ENCODE measurements at regions of chr7 and their contacts with region 1.

Region 1: DNA sequence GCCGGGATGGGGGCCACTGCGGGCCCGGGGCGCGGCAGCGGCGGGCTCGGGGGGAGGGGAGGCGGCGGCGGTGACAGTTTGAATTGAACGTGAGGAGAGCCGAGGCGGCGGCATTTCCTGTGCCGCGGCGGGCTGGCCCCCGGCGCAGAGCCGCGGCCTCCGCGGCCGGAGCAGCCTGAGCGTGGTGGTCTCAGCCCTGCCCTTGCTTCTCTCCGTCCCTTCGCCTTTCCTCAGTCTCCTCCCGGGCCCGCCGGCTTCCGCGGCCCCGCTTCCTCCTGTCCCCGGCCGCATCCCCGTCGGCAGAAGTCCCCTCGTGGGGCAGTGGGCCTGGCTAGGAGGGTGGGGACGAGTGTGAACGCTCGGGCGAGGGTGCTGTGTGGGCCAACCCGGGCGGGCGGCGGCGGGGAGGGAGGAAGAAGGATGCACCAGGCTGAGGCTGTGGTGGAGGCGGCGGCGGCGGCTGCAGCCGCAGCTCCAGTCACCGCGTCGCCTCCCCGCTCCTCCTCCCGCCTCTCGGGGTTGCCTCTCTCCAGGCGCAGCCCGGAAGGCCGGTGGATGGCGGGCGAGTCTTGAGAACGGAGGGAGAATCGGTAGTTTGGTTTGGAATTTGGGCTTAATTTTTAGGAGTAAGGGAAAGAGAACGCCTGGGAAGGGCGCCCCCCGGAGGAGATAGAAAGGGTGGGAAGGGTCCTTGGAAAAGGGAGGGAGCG is 690 bp downstream of the SEPTIN7 start:
- DNase-seq: peak; percentile 73
- H3K4me3 Mint-ChIP-seq: peak overlapping the region; percentile 92
- H3K27ac Mint-ChIP-seq: peak overlapping the region; percentile 94
- H3K4me1 Mint-ChIP-seq: peaks cover 37% of the 10 kb centered on the region
- H3K27me3 Mint-ChIP-seq: no peaks in the 10 kb centered on the region

Region 2: GRCh38 chr7:35537067-35538023 is 264.2 kb before region 1 on chr7:
- intact Hi-C with region 1: no loop called
- DNase-seq: peak; percentile 63
- H3K4me3 Mint-ChIP-seq: peak overlapping the region; percentile 60
- H3K27ac Mint-ChIP-seq: no peak overlapping the region
- H3K4me1 Mint-ChIP-seq: peaks cover 2% of the 10 kb centered on the region
- H3K27me3 Mint-ChIP-seq: peaks cover 18% of the 10 kb centered on the region

Region 3: DNA sequence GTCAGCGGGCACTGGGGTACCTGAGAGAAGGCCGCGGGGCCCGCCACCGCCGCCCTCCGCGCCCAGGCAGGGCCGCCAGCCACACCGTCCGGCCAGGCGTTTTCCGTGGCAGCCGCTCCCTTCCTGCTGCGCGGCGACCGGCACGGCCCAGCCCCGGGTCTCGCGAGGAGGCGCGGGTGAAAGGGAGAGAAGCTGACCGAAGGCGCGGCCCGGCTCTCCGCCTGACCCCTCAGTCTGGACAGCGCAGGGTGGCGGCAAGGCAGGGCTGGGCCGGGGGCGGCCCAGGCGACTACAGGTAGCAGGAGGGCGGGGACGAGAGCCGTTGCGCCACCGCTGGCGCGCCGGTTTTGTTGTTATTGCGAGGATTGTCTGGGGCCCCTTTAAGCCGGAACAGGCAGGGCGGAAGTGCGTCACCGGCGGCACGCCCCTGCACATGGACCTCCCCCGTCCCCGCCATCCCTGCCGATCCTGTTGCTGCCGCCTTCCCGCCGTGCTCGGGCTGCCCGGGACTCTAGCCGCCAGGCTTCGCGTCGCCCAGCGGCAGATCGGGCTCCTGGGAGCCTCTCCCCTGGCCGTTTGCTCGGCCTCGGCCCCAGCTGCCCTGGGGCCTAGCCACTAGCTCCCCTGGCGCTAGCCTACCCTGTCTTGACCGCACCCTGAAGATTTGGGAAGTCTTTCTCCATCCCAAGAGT is 106.6 kb before region 1 on chr7 and contains the start of gene HERPUD2:
- intact Hi-C with region 1: loop called (anchors 1 kb)
- DNase-seq: peak; percentile 89
- H3K4me3 Mint-ChIP-seq: peak within 1 kb of the TSS; percentile 96
- H3K27ac Mint-ChIP-seq: peak within 1 kb of the TSS; percentile 96
- H3K4me1 Mint-ChIP-seq: peaks cover 55% of the 10 kb centered on the region
- H3K27me3 Mint-ChIP-seq: no peaks in the 10 kb centered on the region
- total RNA-seq, gene HERPUD2: 24.9 and 25.8 TPM in 2 replicates

Region 4: GRCh38 chr7:35729061-35729783 is 72.3 kb before region 1 on chr7:
- intact Hi-C with region 1: loop called (anchors 1 kb)
- DNase-seq: no peak
- H3K4me3 Mint-ChIP-seq: peak overlapping the region; percentile 3
- H3K27ac Mint-ChIP-seq: peak overlapping the region; percentile 47
- H3K4me1 Mint-ChIP-seq: peaks cover 45% of the 10 kb centered on the region
- H3K27me3 Mint-ChIP-seq: peaks cover 15% of the 10 kb centered on the region

Region 5: DNA sequence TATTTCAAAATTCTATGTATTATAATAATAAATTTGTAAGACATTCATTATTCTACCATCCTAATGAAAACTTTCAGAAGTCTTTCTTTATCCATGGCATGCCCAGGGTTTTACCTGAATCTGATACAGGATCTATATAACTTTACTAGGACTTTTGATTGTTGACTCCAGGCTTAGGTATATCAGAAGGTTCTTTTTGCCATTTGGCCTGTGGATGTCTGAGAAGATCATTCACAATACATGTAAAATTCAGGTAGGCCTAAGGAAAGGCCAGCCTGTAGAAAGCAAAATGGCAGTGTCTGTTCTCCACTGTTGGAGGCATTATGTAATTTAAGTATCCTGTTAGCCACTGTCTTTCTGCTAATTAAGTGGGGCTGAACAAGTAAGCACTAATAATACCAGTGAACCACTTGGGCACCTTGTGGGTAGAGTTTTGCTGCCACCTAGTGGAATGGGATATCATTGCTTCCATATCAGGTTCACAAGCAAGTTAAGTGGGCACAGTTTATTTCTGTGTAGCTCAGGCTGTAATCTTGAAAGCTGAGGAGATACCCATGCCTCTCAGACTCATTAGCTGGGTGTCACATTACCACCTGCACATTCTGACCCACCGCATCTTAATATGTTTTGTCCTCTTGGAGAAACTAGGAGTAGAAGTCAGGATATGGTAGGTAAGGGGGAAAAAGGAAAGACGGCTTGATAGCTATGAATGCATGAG is 104.8 kb after region 1 on chr7:
- intact Hi-C with region 1: loop called (anchors 1 kb)
- DNase-seq: peak; percentile 41
- H3K4me3 Mint-ChIP-seq: no peak overlapping the region
- H3K27ac Mint-ChIP-seq: no peak overlapping the region
- H3K4me1 Mint-ChIP-seq: peaks cover 3% of the 10 kb centered on the region
- H3K27me3 Mint-ChIP-seq: no peaks in the 10 kb centered on the region

Region 6: DNA sequence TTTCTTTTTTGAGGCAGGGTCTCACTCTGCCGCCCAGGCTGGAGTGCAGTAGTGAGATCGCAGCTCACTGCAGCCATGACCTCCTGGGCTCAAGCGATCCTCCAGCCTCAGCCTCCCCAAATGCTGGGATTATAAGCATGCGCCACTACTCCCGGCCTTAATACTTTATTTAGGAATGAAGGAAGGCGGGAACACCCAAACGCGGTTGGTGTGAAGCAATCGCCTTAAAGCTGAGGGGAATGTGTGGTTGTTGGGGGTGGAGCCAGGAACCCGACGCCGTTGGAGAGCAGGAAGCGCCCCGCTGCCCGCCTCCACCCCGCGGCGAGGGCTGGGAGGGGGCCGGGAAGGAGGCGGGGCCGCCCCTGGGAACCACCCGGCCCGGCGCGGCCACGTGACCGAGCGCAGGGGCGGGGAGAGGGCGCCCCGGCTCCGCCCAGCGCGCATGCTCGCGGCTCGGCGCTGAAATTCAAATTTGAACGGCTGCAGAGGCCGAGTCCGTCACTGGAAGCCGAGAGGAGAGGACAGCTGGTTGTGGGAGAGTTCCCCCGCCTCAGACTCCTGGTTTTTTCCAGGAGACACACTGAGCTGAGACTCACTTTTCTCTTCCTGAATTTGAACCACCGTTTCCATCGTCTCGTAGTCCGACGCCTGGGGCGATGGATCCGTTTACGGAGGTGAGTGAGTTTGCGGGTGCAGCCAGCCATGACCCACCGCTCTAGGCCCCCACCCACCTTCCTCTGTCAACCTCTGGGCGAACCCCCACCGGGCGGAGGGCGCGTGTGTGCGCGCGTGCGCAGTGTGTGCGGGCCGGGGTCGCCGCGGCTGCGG is 588.0 kb after region 1 on chr7 and contains the start of gene ANLN:
- intact Hi-C with region 1: loop called (anchors 10 kb)
- DNase-seq: peak; percentile 83
- H3K4me3 Mint-ChIP-seq: peak within 1 kb of the TSS; percentile 89
- H3K27ac Mint-ChIP-seq: peak within 1 kb of the TSS; percentile 79
- H3K4me1 Mint-ChIP-seq: peaks cover 33% of the 10 kb centered on the region
- H3K27me3 Mint-ChIP-seq: peaks cover 7% of the 10 kb centered on the region
- total RNA-seq, gene ANLN: 38.0 and 38.7 TPM in 2 replicates

Measured in activated T-helper 2 cell treated with anti-CD3 and anti-CD28 coated beads, Interferon-gamma antibody, Interleukin-2, Interleukin-4, amounts not matched to agents 10 μg/mL and 5 μg/mL and 100 μg/mL, durations not matched to agents 14 hours and 24 hours and 36 hours (primary cell).